PC-9 (cell line): ENCODE measurements at regions of chr6 and their contacts with region 1.

Region 1: GRCh38 chr6:57089687-57090460 is at the start of gene ZNF451:
- DNase-seq: peak; percentile 89 to 97
- H3K4me3 ChIP-seq: peak within 1 kb of the TSS; percentile 52; the same call in 1 of the 2 replicates
- H3K27ac ChIP-seq: no peak within 1 kb of the TSS
- H3K4me1 ChIP-seq: peaks cover 17% of the 10 kb centered on the region
- H3K27me3 ChIP-seq: no peaks in the 10 kb centered on the region
- CTCF ChIP-seq: no peak
- total RNA-seq, gene ZNF451: 31.7 and 50.6 TPM in 2 replicates

Region 2: DNA sequence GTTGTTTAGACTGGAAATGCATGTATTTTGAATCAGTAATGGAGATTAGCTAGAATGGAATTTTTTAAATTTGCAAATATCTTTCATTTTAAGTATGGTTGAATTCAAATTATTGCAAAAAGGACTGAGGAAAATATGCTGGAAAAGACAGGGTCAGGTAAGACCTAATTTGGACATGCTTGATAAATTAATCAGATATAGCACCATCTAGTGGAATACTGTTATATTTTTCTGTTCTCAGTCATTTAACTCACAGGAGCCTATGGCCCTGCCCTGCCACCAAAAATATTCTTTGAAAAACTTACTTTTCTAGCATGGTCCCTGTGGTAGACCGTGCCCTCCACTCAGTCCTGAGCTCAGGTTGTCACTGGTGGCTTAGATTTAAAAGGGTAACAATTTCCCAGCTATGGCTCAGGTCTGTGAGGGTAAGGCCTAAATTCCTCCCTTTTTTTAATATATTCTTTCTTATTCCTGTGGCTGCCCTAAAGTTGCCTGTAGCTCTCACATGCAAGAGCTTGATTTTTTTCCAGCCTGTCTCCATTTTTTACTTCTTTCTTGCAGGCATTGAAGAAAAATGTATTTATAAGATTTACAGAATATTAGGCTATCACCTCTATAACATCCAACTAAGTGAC is 68.7 kb before region 1 on chr6:
- CTCF ChIA-PET with region 1: no interaction called
- POLR2A ChIA-PET with region 1: no interaction called
- intact Hi-C with region 1: no loop called
- DNase-seq: peak in 1 of 2 experiments; percentile 64
- H3K4me3 ChIP-seq: no peak overlapping the region
- H3K27ac ChIP-seq: no peak overlapping the region
- H3K4me1 ChIP-seq: no peaks in the 10 kb centered on the region
- H3K27me3 ChIP-seq: no peaks in the 10 kb centered on the region
- CTCF ChIP-seq: peak; percentile 72

Region 3: DNA sequence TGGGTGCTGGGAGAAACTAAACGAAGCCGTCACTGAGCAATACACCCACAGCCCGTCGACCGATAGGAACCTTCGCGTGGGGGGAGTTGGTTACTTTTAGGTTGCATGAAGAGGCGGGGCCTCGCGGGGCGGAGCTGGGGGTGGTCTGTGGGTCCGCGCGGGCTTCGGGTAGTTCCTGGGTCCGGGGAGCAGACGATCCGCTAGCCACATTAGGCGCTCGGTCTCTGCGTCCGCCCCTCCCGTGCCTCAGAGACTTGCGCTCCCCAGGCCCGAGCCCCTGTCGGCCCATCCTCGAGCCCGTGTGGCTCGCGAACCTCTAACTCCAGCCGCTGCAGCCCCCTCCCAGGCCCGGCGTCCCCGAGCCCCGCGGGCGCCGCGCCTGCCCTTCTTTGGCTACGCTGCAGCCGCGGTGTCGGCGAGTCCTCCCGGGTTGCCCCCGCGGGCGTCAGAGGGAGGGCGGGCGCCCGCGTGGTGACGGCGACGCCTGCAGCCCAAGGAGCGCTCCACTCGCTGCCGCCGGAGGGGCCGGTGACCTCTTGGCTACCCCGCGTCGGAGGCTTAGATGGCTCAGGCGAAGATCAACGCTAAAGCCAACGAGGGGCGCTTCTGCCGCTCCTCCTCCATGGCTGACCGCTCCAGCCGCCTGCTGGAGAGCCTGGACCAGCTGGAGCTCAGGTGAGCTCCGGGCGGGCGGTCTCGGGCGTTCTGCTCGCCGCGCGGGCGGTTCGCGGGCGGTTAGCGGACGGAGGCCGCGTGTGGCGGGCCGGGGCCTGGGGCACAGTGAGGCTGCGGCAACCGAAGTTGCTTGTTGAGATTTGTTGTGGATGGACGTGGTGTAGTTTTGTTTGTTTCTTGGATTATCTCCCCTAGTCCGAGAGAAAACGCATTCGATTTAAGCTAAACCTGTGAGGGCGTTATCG is 82.5 kb after region 1 on chr6 and contains the start of gene BAG2:
- CTCF ChIA-PET with region 1: no interaction called
- POLR2A ChIA-PET with region 1: no interaction called
- intact Hi-C with region 1: loop called (anchors 1 kb)
- DNase-seq: peak; percentile 73 to 85
- H3K4me3 ChIP-seq: peak within 1 kb of the TSS; percentile 91
- H3K27ac ChIP-seq: peak within 1 kb of the TSS; percentile 87
- H3K4me1 ChIP-seq: peaks cover 30% of the 10 kb centered on the region
- H3K27me3 ChIP-seq: no peaks in the 10 kb centered on the region
- CTCF ChIP-seq: no peak; the same call in 1 of the 2 replicates
- total RNA-seq, gene BAG2: 9.0 and 11.0 TPM in 2 replicates